Heart left ventricle (tissue), 16 donors: ENCODE measurements at regions of chr2 and their contacts with region 1.

Region 1: DNA sequence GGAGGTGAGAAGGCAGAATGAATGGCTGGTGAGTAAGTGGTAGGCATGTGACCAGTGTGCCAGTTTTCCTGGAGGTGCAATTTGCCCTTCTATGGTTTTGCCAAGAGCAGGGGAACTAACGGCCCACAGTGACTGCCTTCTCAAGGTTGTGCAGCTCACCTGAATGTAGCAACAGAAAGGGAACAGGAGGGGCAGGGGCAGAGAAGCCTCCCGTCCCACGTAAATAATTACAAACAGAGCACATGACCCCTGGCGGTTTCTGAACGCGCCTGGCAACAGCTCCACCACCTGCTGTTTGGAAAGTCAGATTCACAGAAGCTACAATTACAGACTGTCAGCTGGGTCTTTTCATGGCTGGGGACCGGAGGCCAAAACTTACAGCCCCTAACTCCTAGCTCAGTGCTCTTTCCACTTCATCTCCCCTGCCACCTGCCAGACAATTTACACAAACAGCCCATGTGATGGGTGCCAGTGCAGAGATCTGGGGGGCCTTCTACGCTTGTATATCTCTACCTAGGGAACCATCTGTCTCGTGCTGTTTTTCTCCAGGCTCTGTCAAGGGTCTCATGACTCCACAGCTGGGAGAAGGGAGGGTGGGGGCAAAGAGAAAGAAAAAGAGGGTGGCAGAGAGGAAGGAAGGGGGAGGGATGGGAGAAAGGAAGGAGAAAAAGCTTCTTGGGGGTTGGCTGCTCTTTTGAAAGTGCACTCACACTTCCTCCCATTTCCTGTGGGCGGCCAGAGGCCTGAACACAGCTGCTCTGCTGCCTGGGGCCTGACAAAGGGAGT is 69.6 kb downstream of the POLR1A start:
- DNase-seq: peak; percentile 82 to 92 (median 88)
- ATAC-seq: peak; percentile 78 to 84 (median 83)
- H3K4me3 ChIP-seq: no peak overlapping the region
- H3K27ac ChIP-seq: peak overlapping the region; percentile 72 to 97 (median 85)
- H3K4me1 ChIP-seq: peaks cover 19 to 57% (median 45%) of the 10 kb centered on the region in 12 donors
- H3K27me3 ChIP-seq: no peaks in the 10 kb centered on the region
- CTCF ChIP-seq: peak in 8 of 12 donors; percentile 5 to 22 (median 14)
- POLR2A ChIP-seq: no peak

Region 2: GRCh38 chr2:85924522-85924921 is 111.6 kb before region 1 on chr2:
- intact Hi-C with region 1: loop called in 1 of 10 experiments (anchors 5 kb)
- DNase-seq: peak in 4 of 5 donors; percentile 26 to 59 (median 46)
- ATAC-seq: peak; percentile 74 to 92 (median 88)
- H3K4me3 ChIP-seq: no peak overlapping the region
- H3K27ac ChIP-seq: peak overlapping the region; percentile 31 to 75 (median 64)
- H3K4me1 ChIP-seq: peaks cover 0 to 29% (median 20%) of the 10 kb centered on the region in 12 donors
- H3K27me3 ChIP-seq: peaks cover 0 to 3% (median 0%) of the 10 kb centered on the region in 9 donors
- CTCF ChIP-seq: no peak
- POLR2A ChIP-seq: no peak

Region 3: GRCh38 chr2:85976106-85976920 is 59.8 kb before region 1 on chr2:
- intact Hi-C with region 1: loop called in 1 of 10 experiments (anchors 10 kb)
- DNase-seq: peak in 2 of 5 donors; percentile 43 to 73
- ATAC-seq: peak; percentile 34 to 78 (median 68)
- H3K4me3 ChIP-seq: no peak overlapping the region
- H3K27ac ChIP-seq: no peak overlapping the region
- H3K4me1 ChIP-seq: peaks cover 0 to 25% (median 13%) of the 10 kb centered on the region in 12 donors
- H3K27me3 ChIP-seq: peaks cover 0 to 36% (median 0%) of the 10 kb centered on the region in 9 donors
- CTCF ChIP-seq: no peak
- POLR2A ChIP-seq: no peak

Region 4: GRCh38 chr2:86066007-86066578 is 30.0 kb after region 1 on chr2:
- intact Hi-C with region 1: loop called in 2 of 10 experiments (anchors 2 to 5 kb)
- DNase-seq: no peak
- ATAC-seq: no peak
- H3K4me3 ChIP-seq: no peak overlapping the region
- H3K27ac ChIP-seq: peak overlapping the region in 3 of 12 donors; percentile 20 to 60 (median 28)
- H3K4me1 ChIP-seq: peaks cover 0 to 30% (median 5%) of the 10 kb centered on the region in 12 donors
- H3K27me3 ChIP-seq: no peaks in the 10 kb centered on the region
- CTCF ChIP-seq: no peak
- POLR2A ChIP-seq: no peak

Region 5: DNA sequence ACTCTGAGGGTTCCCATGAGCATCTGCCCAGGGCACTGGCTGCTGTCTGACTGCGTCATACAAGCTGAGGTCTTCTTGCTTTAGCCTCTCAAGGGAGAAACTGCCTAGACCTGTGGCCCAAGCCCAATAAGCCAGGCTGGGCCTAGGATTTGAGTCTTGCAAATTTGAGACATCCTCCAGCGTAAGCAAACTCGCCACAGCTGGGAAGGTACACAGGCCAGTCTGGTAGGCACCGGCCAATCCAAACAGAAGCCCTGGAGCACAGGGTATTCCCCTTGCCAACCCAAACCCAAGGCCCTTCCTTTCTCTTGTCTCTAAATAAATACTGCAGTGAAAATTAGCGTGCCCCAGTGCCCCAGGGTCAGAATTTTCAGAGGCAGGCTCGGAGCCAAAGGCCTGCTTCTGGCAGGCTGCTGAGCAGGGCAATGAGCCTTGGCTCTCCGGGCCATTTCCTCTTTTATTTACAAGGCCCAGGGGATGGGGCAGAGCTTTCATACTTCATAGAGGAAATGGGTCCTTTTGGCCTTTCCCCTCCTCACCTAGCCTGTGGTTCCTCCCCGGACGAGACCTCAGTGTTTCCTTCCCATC is 36.3 kb after region 1 on chr2:
- intact Hi-C with region 1: loop called in 2 of 10 experiments (anchors 2 to 5 kb)
- DNase-seq: peak; percentile 61 to 80 (median 66)
- ATAC-seq: peak; percentile 67 to 84 (median 80)
- H3K4me3 ChIP-seq: no peak overlapping the region
- H3K27ac ChIP-seq: peak overlapping the region in 11 of 12 donors; percentile 23 to 72 (median 61)
- H3K4me1 ChIP-seq: peaks cover 0 to 38% (median 16%) of the 10 kb centered on the region in 12 donors
- H3K27me3 ChIP-seq: no peaks in the 10 kb centered on the region
- CTCF ChIP-seq: no peak
- POLR2A ChIP-seq: no peak